Caco-2 (cell line): ENCODE measurements at regions of chr1 and their contacts with region 1.

Region 1: GRCh38 chr1:15343729-15344128 is 66.0 kb upstream of the EFHD2 start:
- DNase-seq: no peak
- H3K4me3 ChIP-seq: no peak overlapping the region
- H3K4me3 Mint-ChIP-seq: no peak overlapping the region
- H3K27ac Mint-ChIP-seq: no peak overlapping the region
- H3K4me1 ChIP-seq: no peaks in the 10 kb centered on the region
- H3K4me1 Mint-ChIP-seq: no peaks in the 10 kb centered on the region
- H3K27me3 ChIP-seq: no peaks in the 10 kb centered on the region
- H3K27me3 Mint-ChIP-seq: no peaks in the 10 kb centered on the region
- CTCF ChIP-seq: no peak

Region 2: GRCh38 chr1:14835725-14836124 is 508.0 kb before region 1 on chr1:
- CTCF ChIA-PET with region 1: no interaction called
- POLR2A ChIA-PET with region 1: no interaction called
- intact Hi-C with region 1: no loop called
- DNase-seq: no peak
- H3K4me3 ChIP-seq: no peak overlapping the region
- H3K4me3 Mint-ChIP-seq: no peak overlapping the region
- H3K27ac Mint-ChIP-seq: no peak overlapping the region
- H3K4me1 ChIP-seq: no peaks in the 10 kb centered on the region
- H3K4me1 Mint-ChIP-seq: no peaks in the 10 kb centered on the region
- H3K27me3 ChIP-seq: no peaks in the 10 kb centered on the region
- H3K27me3 Mint-ChIP-seq: peaks cover 3% of the 10 kb centered on the region
- CTCF ChIP-seq: no peak

Region 3: DNA sequence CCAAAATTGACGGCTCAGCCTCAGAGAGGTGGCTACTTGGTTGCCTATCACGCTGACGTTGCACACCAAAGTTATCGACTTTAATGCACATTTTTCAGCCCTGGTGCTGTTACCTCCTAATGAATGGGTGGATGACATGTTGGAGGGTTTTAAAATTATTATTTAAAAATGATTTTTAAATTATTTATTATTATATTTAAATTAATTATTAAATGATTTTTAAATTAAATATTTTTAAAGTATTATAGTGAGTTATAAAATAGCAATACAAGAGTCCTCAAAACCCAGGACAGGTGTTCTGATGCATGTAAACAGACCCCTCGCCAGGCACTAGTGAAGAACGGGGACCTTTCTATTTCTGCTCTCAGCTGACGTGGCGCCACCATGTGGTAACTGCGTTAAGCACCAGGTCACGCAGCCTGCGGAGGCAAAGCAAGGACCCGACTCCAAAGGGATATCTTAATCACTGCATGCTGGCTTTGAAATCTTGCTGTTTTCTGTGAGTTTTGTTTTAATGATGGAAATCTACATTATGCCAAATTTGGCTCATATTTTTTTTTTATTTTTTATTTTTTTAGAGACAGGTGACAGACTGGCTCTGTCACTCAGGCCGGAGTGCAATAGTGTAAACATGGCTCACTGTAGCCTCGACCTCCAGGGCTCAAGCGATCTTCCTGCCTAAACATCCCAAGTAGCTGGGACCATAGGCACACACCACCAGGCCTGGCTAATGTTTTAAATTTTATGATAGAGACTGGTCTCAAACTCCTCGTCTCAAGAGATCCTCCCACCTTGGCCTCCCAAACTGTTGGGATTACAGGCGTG is 157.7 kb after region 1 on chr1:
- CTCF ChIA-PET with region 1: interaction called, 10 read pairs
- POLR2A ChIA-PET with region 1: no interaction called
- intact Hi-C with region 1: no loop called
- DNase-seq: peak; percentile 52 to 65
- H3K4me3 ChIP-seq: no peak overlapping the region
- H3K4me3 Mint-ChIP-seq: no peak overlapping the region
- H3K27ac Mint-ChIP-seq: no peak overlapping the region
- H3K4me1 ChIP-seq: no peaks in the 10 kb centered on the region
- H3K4me1 Mint-ChIP-seq: no peaks in the 10 kb centered on the region
- H3K27me3 ChIP-seq: no peaks in the 10 kb centered on the region
- H3K27me3 Mint-ChIP-seq: no peaks in the 10 kb centered on the region
- CTCF ChIP-seq: peak; percentile 71 to 73